ENCODE measurements at regions of chr5 and their contacts with region 1.

Region 1: DNA sequence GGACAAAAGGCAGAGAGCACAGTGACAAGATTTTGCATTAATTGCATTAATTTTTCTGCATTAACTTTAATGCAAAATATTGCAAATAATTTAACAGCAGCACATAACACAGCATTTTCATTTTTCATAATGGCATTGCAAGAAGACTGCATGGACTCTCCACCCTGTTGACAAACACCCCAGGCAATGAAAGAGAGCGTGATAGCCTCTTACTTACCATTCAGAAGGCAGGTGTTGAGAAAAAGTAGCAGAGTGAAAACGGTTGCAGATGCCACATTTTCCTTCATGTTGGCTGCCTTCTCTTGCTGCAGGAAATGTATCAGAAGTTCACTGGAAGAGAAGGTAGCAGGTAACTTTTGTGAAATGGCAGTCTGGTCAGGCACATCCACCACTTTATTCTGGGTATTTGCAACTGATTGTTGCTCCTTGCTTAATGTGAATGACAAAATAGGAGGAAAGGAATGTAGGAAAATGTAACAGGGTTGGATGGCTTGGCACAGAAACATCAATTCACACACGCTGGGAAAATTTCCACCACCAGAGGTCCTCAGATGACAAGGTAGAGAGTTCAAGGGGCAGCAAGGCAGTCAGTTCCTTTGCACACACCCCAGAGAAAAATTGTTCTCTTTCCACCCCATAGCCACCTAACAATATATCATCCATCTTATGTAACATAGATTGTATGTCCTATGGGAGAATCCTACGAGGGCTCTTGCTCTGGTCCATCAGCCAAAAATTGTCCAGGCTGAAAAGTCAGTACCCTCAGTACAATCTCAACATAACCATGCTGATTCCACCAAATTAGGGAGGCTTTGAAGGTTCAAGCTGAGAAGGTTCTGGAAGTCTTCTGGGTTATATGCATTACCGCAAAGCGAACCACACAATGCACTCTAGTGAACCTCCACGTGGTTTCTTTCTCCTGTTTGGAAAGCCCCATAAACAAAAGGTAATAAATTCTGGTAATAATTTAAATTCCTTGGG is 41.9 kb upstream of the AGXT2 start:
- DNase-seq: no peak
- ATAC-seq: peak; percentile 57 to 83
- H3K4me3 ChIP-seq: no peak overlapping the region
- H3K27ac ChIP-seq: no peak overlapping the region
- H3K4me1 ChIP-seq: no peaks in the 10 kb centered on the region
- H3K27me3 ChIP-seq: no peaks in the 10 kb centered on the region
- CTCF ChIP-seq: peak; percentile 77

Region 2: GRCh38 chr5:35926389-35927051 is 836.9 kb after region 1 on chr5:
- intact Hi-C with region 1: loop called (anchors 10 kb)
- DNase-seq: no peak
- ATAC-seq: peak; percentile 70 to 77
- H3K4me3 ChIP-seq: no peak overlapping the region
- H3K27ac ChIP-seq: no peak overlapping the region
- H3K4me1 ChIP-seq: peaks cover 9% of the 10 kb centered on the region
- H3K27me3 ChIP-seq: no peaks in the 10 kb centered on the region
- CTCF ChIP-seq: peak; percentile 84